GM12878 (cell line): ENCODE measurements at regions of chr6 and their contacts with region 1.

Region 1: GRCh38 chr6:129498950-129499842 is 210.8 kb downstream of the ARHGAP18 start:
- DNase-seq: no peak
- ATAC-seq: peak; percentile 89
- H3K4me3 ChIP-seq: no peak overlapping the region
- H3K27ac ChIP-seq: no peak overlapping the region
- H3K4me1 ChIP-seq: peaks cover 6% of the 10 kb centered on the region
- H3K27me3 ChIP-seq: no peaks in the 10 kb centered on the region
- CTCF ChIP-seq: peak; percentile 37 to 63 (median 44); a peak in 5 of 6 replicates
- EP300 ChIP-seq: no peak
- POLR2A ChIP-seq: no peak
- RAD21 ChIP-seq: peak; percentile 88

Region 2: DNA sequence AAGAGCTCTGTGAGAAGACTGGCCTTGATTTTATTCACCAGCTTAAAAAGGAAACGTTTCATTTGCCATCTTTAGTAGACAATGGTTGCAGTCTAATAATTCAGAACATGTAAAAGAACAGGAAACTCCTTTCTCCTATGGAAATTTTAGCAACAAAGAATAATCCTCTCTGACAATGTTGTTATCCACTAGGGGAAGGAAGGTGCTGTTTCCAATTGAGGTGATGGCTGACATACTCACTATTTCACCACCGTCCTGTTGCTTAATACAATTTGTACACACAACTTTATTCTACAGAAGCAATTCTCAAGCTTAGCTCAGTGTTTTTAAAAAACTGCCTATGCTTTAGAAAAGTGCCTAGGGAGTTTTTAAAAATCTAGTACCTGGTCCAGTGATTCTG is 18.1 kb after region 1 on chr6:
- CTCF ChIA-PET with region 1: interaction called, 20 read pairs
- POLR2A ChIA-PET with region 1: interaction called, 4 read pairs
- RAD21 ChIA-PET with region 1: interaction called, 4 read pairs
- SMC1A ChIA-PET with region 1: interaction called, 5 read pairs
- in situ Hi-C with region 1: no loop called
- intact Hi-C with region 1: no loop called
- DNase-seq: no peak
- ATAC-seq: no peak
- H3K4me3 ChIP-seq: no peak overlapping the region
- H3K27ac ChIP-seq: no peak overlapping the region
- H3K4me1 ChIP-seq: no peaks in the 10 kb centered on the region
- H3K27me3 ChIP-seq: no peaks in the 10 kb centered on the region
- CTCF ChIP-seq: no peak
- EP300 ChIP-seq: no peak
- POLR2A ChIP-seq: no peak
- RAD21 ChIP-seq: no peak

Region 3: DNA sequence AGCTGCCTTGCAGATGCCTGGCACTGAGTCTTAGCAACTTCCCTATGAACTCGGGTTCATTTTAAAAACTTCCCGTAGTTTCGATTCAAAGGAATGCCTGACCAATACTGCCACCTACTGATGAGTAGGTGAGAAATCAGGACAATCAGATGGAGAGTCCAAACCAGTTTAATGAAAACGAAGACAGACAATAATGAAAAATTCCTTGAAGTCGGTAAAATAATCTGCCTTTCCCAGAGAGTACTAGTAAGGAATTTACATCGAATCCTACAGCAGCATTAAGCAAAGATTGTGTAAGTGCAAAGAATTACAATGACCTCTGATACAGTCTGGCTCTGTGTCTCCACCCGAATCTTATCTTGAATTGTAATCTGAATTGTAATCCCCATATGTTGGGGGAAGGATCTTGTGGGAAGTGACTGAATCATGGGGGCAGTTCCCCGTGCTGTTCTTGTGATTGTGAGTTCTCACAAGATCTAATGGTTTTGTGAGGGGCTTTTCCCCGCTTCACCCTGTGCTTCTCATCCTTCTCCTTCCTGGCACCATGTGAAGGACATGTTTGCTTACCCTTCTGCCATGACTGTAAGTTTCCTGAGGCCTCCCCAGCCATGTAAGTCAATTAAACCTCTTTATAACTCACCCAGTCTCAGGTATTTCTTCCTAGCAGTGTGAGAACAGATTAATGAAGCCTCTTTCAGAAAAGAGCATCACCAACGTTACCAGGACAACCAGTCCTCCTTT is 76.4 kb after region 1 on chr6:
- CTCF ChIA-PET with region 1: interaction called, 5 read pairs
- POLR2A ChIA-PET with region 1: no interaction called
- RAD21 ChIA-PET with region 1: no interaction called
- SMC1A ChIA-PET with region 1: no interaction called
- in situ Hi-C with region 1: no loop called
- intact Hi-C with region 1: loop called (anchors 1 kb)
- DNase-seq: no peak
- ATAC-seq: no peak
- H3K4me3 ChIP-seq: no peak overlapping the region
- H3K27ac ChIP-seq: no peak overlapping the region
- H3K4me1 ChIP-seq: no peaks in the 10 kb centered on the region
- H3K27me3 ChIP-seq: no peaks in the 10 kb centered on the region
- CTCF ChIP-seq: peak in 2 of 3 experiments; percentile 11 to 33; a peak in 2 of 6 replicates
- EP300 ChIP-seq: no peak
- POLR2A ChIP-seq: no peak
- RAD21 ChIP-seq: peak; percentile 43; the same call in 1 of the 2 replicates

Region 4: GRCh38 chr6:129725341-129725740 is 226.1 kb after region 1 on chr6:
- CTCF ChIA-PET with region 1: interaction called, 141 read pairs
- POLR2A ChIA-PET with region 1: no interaction called
- RAD21 ChIA-PET with region 1: interaction called, 60 read pairs
- SMC1A ChIA-PET with region 1: interaction called, 95 read pairs
- in situ Hi-C with region 1: no loop called
- intact Hi-C with region 1: loop called (anchors 1 kb)
- DNase-seq: no peak
- ATAC-seq: no peak
- H3K4me3 ChIP-seq: no peak overlapping the region
- H3K27ac ChIP-seq: no peak overlapping the region
- H3K4me1 ChIP-seq: no peaks in the 10 kb centered on the region
- H3K27me3 ChIP-seq: no peaks in the 10 kb centered on the region
- CTCF ChIP-seq: no peak
- EP300 ChIP-seq: no peak
- POLR2A ChIP-seq: no peak
- RAD21 ChIP-seq: no peak

Region 5: GRCh38 chr6:129774697-129775447 is 275.7 kb after region 1 on chr6:
- CTCF ChIA-PET with region 1: interaction called, 36 read pairs
- POLR2A ChIA-PET with region 1: no interaction called
- RAD21 ChIA-PET with region 1: interaction called, 9 read pairs
- SMC1A ChIA-PET with region 1: interaction called, 10 read pairs
- in situ Hi-C with region 1: no loop called
- intact Hi-C with region 1: no loop called
- DNase-seq: no peak
- ATAC-seq: peak; percentile 72
- H3K4me3 ChIP-seq: no peak overlapping the region
- H3K27ac ChIP-seq: no peak overlapping the region
- H3K4me1 ChIP-seq: no peaks in the 10 kb centered on the region
- H3K27me3 ChIP-seq: no peaks in the 10 kb centered on the region
- CTCF ChIP-seq: peak; percentile 70 to 88 (median 80)
- EP300 ChIP-seq: no peak
- POLR2A ChIP-seq: no peak
- RAD21 ChIP-seq: peak; percentile 63

Region 6: GRCh38 chr6:129936329-129937165 is 437.4 kb after region 1 on chr6:
- CTCF ChIA-PET with region 1: interaction called, 21 read pairs
- POLR2A ChIA-PET with region 1: no interaction called
- RAD21 ChIA-PET with region 1: interaction called, 5 read pairs
- SMC1A ChIA-PET with region 1: interaction called, 6 read pairs
- in situ Hi-C with region 1: loop called (anchors 10 kb)
- intact Hi-C with region 1: loop called (anchors 1 kb)
- DNase-seq: peak; percentile 21
- ATAC-seq: peak; percentile 84
- H3K4me3 ChIP-seq: no peak overlapping the region
- H3K27ac ChIP-seq: no peak overlapping the region
- H3K4me1 ChIP-seq: no peaks in the 10 kb centered on the region
- H3K27me3 ChIP-seq: no peaks in the 10 kb centered on the region; a peak in 1 of 4 replicates
- CTCF ChIP-seq: peak; percentile 64 to 77 (median 66)
- EP300 ChIP-seq: no peak
- POLR2A ChIP-seq: no peak
- RAD21 ChIP-seq: peak; percentile 81

Region 7: DNA sequence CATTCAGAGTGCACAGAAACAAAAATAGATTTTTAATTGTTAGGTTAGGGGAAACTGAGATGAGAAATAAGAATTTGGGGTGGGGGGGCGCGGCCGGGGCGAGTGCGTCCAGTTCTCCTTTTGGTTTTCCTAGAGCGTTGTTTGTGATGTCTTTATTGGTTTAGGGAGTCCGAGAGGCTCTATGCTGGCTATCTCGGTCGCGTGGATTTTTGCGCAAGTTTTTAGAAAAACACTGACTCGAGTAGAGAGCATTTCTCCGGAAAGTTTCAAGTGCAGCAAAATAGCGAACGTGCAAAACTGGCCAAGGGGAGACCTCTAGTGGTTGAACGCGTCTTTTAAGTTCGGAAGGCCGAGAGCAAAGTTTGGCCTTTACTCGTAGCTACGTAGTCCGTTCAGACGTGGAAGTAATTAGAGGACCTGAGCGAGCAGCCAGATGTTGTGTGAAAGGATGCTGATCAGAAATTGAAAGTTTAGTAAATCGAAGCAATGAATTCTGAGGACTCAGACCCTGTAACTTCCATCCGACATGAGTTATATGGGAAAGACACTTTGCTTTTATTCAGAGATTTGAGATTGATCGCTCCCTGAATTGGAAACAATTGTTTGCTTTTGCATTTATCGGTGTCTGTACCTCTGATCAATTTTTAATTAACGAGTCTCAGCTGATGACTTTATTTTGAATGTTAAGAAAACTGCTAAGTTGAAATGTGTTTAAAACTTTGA is 521.9 kb after region 1 on chr6:
- CTCF ChIA-PET with region 1: interaction called, 7 read pairs
- POLR2A ChIA-PET with region 1: no interaction called
- RAD21 ChIA-PET with region 1: interaction called, 10 read pairs
- SMC1A ChIA-PET with region 1: interaction called, 7 read pairs
- in situ Hi-C with region 1: no loop called
- intact Hi-C with region 1: loop called (anchors 2 kb)
- DNase-seq: peak; percentile 72
- ATAC-seq: peak; percentile 82
- H3K4me3 ChIP-seq: peak overlapping the region; percentile 82
- H3K27ac ChIP-seq: no peak overlapping the region
- H3K4me1 ChIP-seq: no peaks in the 10 kb centered on the region
- H3K27me3 ChIP-seq: no peaks in the 10 kb centered on the region
- CTCF ChIP-seq: peak; percentile 80 to 94 (median 81); a peak in 5 of 6 replicates
- EP300 ChIP-seq: no peak
- POLR2A ChIP-seq: no peak
- RAD21 ChIP-seq: peak; percentile 94